ENCODE measurements at regions of chr6 and their contacts with region 1.

Region 1: GRCh38 chr6:20542927-20543602 is 8.8 kb downstream of the CDKAL1 start:
- DNase-seq: peak; percentile 53
- ATAC-seq: peak; percentile 97
- H3K4me3 Mint-ChIP-seq: peak overlapping the region; percentile 11
- H3K27ac Mint-ChIP-seq: peak overlapping the region; percentile 69
- H3K4me1 Mint-ChIP-seq: peaks cover 45% of the 10 kb centered on the region
- H3K27me3 Mint-ChIP-seq: no peaks in the 10 kb centered on the region

Region 2: DNA sequence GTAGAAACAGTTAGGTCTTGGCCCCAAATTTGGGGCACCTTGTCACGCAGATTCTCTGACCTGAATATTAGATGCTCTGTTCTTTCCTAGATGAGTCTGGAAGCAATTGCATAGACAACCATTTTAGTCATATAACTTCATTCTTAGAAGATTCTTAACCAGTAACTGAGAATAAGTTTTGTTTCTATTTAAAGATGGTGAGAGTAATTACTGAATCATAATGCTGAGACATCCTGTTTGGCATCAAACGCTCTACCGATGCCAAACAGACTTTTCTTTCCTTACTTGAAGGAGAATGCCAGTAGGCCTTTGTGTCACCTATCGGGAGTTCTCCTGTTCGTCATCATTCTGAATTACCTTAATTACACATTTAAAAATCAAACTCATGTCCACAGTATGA is 837.5 kb before region 1 on chr6:
- CTCF ChIA-PET with region 1: no interaction called
- POLR2A ChIA-PET with region 1: no interaction called
- intact Hi-C with region 1: no loop called
- DNase-seq: no peak
- ATAC-seq: no peak
- H3K4me3 Mint-ChIP-seq: no peak overlapping the region
- H3K27ac Mint-ChIP-seq: no peak overlapping the region
- H3K4me1 Mint-ChIP-seq: no peaks in the 10 kb centered on the region
- H3K27me3 Mint-ChIP-seq: no peaks in the 10 kb centered on the region

Region 3: GRCh38 chr6:20708367-20709124 is 165.5 kb after region 1 on chr6:
- CTCF ChIA-PET with region 1: no interaction called
- POLR2A ChIA-PET with region 1: no interaction called
- intact Hi-C with region 1: loop called in 1 of 2 experiments (anchors 5 kb)
- DNase-seq: peak; percentile 49
- ATAC-seq: peak; percentile 43
- H3K4me3 Mint-ChIP-seq: no peak overlapping the region
- H3K27ac Mint-ChIP-seq: peak overlapping the region; percentile 23
- H3K4me1 Mint-ChIP-seq: peaks cover 55% of the 10 kb centered on the region
- H3K27me3 Mint-ChIP-seq: no peaks in the 10 kb centered on the region

Region 4: DNA sequence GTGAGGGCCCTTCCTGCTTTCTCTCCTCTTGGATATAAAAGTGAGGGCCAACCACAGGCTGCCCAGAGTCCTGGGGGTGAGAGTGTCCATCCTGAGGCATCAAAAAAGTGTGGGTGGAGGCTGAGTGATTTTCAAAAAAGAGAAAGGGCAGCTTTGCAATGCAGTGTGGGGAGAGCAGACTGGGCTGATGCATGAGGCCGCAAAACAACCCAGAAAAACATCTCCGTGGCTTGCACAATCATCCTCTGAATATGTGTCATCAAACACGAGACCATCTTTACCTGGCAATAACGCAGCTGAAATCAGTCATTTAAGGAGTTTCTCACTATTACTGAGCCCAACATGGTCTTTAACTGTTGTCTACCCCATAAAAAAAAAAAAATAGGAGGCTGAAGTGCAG is 859.3 kb after region 1 on chr6:
- CTCF ChIA-PET with region 1: no interaction called
- POLR2A ChIA-PET with region 1: no interaction called
- intact Hi-C with region 1: loop called in 1 of 2 experiments (anchors 2 kb)
- DNase-seq: peak; percentile 70
- ATAC-seq: peak; percentile 96
- H3K4me3 Mint-ChIP-seq: no peak overlapping the region
- H3K27ac Mint-ChIP-seq: no peak overlapping the region
- H3K4me1 Mint-ChIP-seq: peaks cover 13% of the 10 kb centered on the region
- H3K27me3 Mint-ChIP-seq: peaks cover 4% of the 10 kb centered on the region

Region 5: GRCh38 chr6:22068561-22069305 is 1525.7 kb after region 1 on chr6:
- CTCF ChIA-PET with region 1: no interaction called
- POLR2A ChIA-PET with region 1: no interaction called
- intact Hi-C with region 1: loop called in 1 of 2 experiments (anchors 2 kb)
- DNase-seq: peak; percentile 59
- ATAC-seq: peak; percentile 90
- H3K4me3 Mint-ChIP-seq: peak overlapping the region; percentile 11
- H3K27ac Mint-ChIP-seq: peak overlapping the region; percentile 81
- H3K4me1 Mint-ChIP-seq: peaks cover 32% of the 10 kb centered on the region
- H3K27me3 Mint-ChIP-seq: peaks cover 10% of the 10 kb centered on the region